GM12878 (cell line): ENCODE measurements at regions of chr18 and their contacts with region 1.

Region 1: GRCh38 chr18:72700961-72701718 is 157.0 kb upstream of the CBLN2 start:
- DNase-seq: no peak
- ATAC-seq: peak; percentile 64
- H3K4me3 ChIP-seq: no peak overlapping the region
- H3K27ac ChIP-seq: no peak overlapping the region
- H3K4me1 ChIP-seq: no peaks in the 10 kb centered on the region
- H3K27me3 ChIP-seq: no peaks in the 10 kb centered on the region
- CTCF ChIP-seq: peak in 2 of 3 experiments; percentile 27 to 46; a peak in 3 of 6 replicates
- EP300 ChIP-seq: no peak
- POLR2A ChIP-seq: no peak
- RAD21 ChIP-seq: peak; percentile 47

Region 2: DNA sequence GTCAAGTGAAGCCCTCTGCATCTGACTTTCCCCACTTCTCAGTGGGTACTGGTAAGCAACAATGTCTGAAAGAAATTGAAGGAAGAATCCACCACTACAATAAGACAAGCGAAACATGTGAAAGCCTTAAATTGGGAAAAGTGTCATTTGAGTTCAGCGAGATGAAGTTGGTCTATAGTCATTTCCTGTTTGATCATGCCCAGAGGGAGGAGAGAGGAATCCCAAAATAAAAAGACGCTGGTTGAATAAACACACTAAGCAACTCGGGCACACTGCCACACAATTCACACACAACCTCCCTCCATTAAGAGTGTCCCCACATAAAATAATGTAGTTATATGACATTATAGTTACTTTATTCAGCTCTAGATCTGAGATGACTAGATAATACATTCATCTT is 323.1 kb before region 1 on chr18:
- CTCF ChIA-PET with region 1: no interaction called
- POLR2A ChIA-PET with region 1: no interaction called
- RAD21 ChIA-PET with region 1: no interaction called
- SMC1A ChIA-PET with region 1: no interaction called
- in situ Hi-C with region 1: no loop called
- intact Hi-C with region 1: no loop called
- DNase-seq: no peak
- ATAC-seq: no peak
- H3K4me3 ChIP-seq: no peak overlapping the region
- H3K27ac ChIP-seq: no peak overlapping the region
- H3K4me1 ChIP-seq: no peaks in the 10 kb centered on the region
- H3K27me3 ChIP-seq: no peaks in the 10 kb centered on the region
- CTCF ChIP-seq: no peak
- EP300 ChIP-seq: no peak
- POLR2A ChIP-seq: no peak
- RAD21 ChIP-seq: no peak

Region 3: DNA sequence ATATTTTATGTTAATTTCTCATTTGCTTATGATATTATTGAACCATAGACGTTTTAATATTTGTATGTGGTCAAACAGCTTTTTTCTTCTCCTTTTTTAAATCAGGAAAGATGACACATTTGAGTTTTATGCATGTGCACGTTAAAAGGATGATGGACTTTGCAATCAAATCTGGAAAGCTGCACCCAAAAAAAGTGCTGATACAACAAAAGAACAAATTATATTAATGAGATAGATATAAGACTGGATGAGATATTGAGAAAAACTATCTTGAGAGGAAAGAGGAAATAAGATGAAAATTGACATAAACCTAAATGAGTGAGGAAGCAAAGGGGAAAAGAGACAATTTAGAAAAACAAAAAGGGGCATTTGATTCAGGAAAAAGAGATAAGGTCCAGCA is 60.6 kb before region 1 on chr18:
- CTCF ChIA-PET with region 1: no interaction called
- POLR2A ChIA-PET with region 1: no interaction called
- RAD21 ChIA-PET with region 1: no interaction called
- SMC1A ChIA-PET with region 1: no interaction called
- in situ Hi-C with region 1: no loop called
- intact Hi-C with region 1: no loop called
- DNase-seq: no peak
- ATAC-seq: no peak
- H3K4me3 ChIP-seq: no peak overlapping the region
- H3K27ac ChIP-seq: no peak overlapping the region
- H3K4me1 ChIP-seq: no peaks in the 10 kb centered on the region
- H3K27me3 ChIP-seq: no peaks in the 10 kb centered on the region
- CTCF ChIP-seq: no peak
- EP300 ChIP-seq: no peak
- POLR2A ChIP-seq: no peak
- RAD21 ChIP-seq: no peak

Region 4: GRCh38 chr18:73842795-73843394 is 1141.8 kb after region 1 on chr18:
- CTCF ChIA-PET with region 1: interaction called, 10 read pairs
- POLR2A ChIA-PET with region 1: no interaction called
- RAD21 ChIA-PET with region 1: interaction called, 4 read pairs
- SMC1A ChIA-PET with region 1: interaction called, 3 read pairs
- in situ Hi-C with region 1: no loop called
- intact Hi-C with region 1: loop called (anchors 2 kb)
- DNase-seq: peak; percentile 1
- ATAC-seq: peak; percentile 81
- H3K4me3 ChIP-seq: no peak overlapping the region
- H3K27ac ChIP-seq: no peak overlapping the region
- H3K4me1 ChIP-seq: no peaks in the 10 kb centered on the region
- H3K27me3 ChIP-seq: no peaks in the 10 kb centered on the region
- CTCF ChIP-seq: peak; percentile 80 to 93 (median 93)
- EP300 ChIP-seq: no peak
- POLR2A ChIP-seq: no peak
- RAD21 ChIP-seq: peak; percentile 83